Activated B cell treated with CpG ODN at 0.5 μM for 24 hours (primary cell): ENCODE measurements at regions of chr1 and their contacts with region 1.

Region 1: GRCh38 chr1:44775078-44775929 is at the start of gene RPS8:
- DNase-seq: peak; percentile 84
- ATAC-seq: peak; percentile 82
- H3K4me3 Mint-ChIP-seq: peak within 1 kb of the TSS; percentile 98
- H3K27ac Mint-ChIP-seq: peak within 1 kb of the TSS; percentile 99
- H3K4me1 Mint-ChIP-seq: peaks cover 40% of the 10 kb centered on the region
- H3K27me3 Mint-ChIP-seq: no peaks in the 10 kb centered on the region
- CTCF ChIP-seq: no peak
- total RNA-seq, gene RPS8: 3,767 and 4,240 TPM in 2 replicates

Region 2: DNA sequence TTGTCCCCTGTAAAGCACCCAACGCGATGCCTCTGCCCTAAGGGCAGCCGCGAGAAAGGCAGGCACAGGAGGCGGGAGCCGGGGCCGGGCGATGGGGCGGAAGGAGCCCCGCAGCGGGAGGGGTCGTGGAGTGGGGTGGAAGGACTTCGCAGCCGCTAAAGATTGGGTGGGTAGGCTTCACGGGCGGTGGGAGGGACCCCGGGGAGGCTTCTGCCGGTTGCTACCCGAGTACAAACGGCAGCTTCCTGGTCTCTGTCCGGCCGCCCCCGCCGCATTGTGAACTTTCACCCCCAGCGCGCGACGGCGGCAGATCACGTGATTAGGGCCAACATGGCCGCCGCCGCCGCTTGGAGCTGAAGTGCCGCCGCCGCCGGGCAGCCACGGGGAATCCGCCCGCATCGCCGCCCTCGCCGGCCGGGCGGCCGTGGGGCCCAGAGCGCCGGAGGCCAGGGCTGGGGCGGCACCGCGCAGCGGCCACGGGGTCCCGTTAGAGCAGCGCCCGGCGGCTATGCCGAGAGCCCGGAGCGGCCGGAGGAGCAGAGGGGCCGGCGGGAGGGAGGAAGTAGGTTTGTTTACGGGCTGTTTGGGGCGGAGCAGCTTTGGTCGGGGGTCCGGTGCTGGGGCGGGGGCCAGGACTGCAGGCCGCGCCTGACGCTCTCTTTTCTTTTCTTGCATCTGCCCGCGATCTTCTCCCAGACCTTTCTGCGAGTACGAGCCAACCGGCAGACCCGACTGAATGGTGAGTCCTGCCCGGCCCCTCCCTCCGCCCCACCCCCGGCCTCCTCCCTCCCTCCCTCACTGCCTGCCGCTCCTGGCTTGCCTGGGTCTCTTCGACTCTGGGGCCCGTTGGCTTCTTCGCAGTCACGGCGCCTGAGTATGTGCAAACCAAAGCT is 143.4 kb before region 1 on chr1:
- CTCF ChIA-PET with region 1: no interaction called
- POLR2A ChIA-PET with region 1: interaction called, 15 read pairs
- intact Hi-C with region 1: no loop called
- DNase-seq: peak; percentile 92
- ATAC-seq: peak; percentile 76
- H3K4me3 Mint-ChIP-seq: peak overlapping the region; percentile 91
- H3K27ac Mint-ChIP-seq: peak overlapping the region; percentile 98
- H3K4me1 Mint-ChIP-seq: peaks cover 38% of the 10 kb centered on the region
- H3K27me3 Mint-ChIP-seq: no peaks in the 10 kb centered on the region
- CTCF ChIP-seq: no peak

Region 3: DNA sequence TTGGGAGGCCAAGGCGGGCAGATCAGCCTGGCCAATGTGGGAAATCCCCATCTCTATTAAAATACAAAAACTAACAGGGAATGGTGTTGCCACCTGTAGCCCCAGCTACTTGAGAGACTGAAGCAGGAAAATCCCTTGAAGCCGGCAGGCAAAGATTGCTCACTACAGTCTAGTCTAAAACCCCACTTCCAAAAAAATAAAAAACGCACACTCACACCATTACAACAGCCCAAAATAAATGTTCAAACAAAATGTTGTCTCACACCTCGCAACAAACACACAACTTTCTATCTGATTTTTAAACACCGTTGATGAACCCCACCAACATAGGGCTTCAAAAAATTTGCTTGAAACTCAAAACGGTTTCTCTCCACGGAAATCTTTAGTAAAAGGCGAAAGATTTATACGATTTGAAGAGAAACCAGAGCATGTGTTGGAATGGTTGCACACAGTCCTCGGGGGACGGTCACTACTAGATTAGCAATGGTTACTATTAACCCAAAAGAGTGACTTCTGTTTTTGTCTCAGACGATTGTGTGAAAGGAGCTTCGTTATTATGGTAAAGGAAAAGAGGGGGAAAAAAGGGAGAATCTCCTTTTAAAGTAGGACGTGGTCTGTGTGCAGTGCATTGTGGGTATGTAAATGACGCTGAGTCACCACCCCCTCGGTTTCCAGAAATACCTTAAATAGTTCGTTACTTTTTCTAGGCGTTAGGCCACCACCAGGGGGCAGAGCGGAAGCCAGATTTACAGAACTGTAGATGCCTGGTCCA is 44.4 kb before region 1 on chr1 and contains the start of gene RNU5D-1:
- CTCF ChIA-PET with region 1: interaction called, 10 read pairs
- POLR2A ChIA-PET with region 1: interaction called, 149 read pairs
- intact Hi-C with region 1: loop called (anchors 1 kb)
- DNase-seq: peak; percentile 84
- ATAC-seq: peak; percentile 71
- H3K4me3 Mint-ChIP-seq: peak within 1 kb of the TSS; percentile 78
- H3K27ac Mint-ChIP-seq: peak within 1 kb of the TSS; percentile 100
- H3K4me1 Mint-ChIP-seq: peaks cover 37% of the 10 kb centered on the region
- H3K27me3 Mint-ChIP-seq: no peaks in the 10 kb centered on the region
- CTCF ChIP-seq: peak; percentile 39
- total RNA-seq, gene RNU5D-1: not detected in 2 replicates

Region 4: GRCh38 chr1:44760876-44761275 is 14.4 kb before region 1 on chr1:
- CTCF ChIA-PET with region 1: no interaction called
- POLR2A ChIA-PET with region 1: interaction called, 10 read pairs
- intact Hi-C with region 1: no loop called
- DNase-seq: no peak
- ATAC-seq: no peak
- H3K4me3 Mint-ChIP-seq: no peak overlapping the region
- H3K27ac Mint-ChIP-seq: no peak overlapping the region
- H3K4me1 Mint-ChIP-seq: peaks cover 13% of the 10 kb centered on the region
- H3K27me3 Mint-ChIP-seq: no peaks in the 10 kb centered on the region
- CTCF ChIP-seq: no peak

Region 5: GRCh38 chr1:44799770-44800584 is 24.7 kb after region 1 on chr1 and contains the start of gene PLK3:
- CTCF ChIA-PET with region 1: interaction called, 3 read pairs
- POLR2A ChIA-PET with region 1: interaction called, 38 read pairs
- intact Hi-C with region 1: no loop called
- DNase-seq: peak; percentile 94
- ATAC-seq: peak; percentile 88
- H3K4me3 Mint-ChIP-seq: peak within 1 kb of the TSS; percentile 97
- H3K27ac Mint-ChIP-seq: peak within 1 kb of the TSS; percentile 100
- H3K4me1 Mint-ChIP-seq: peaks cover 33% of the 10 kb centered on the region
- H3K27me3 Mint-ChIP-seq: no peaks in the 10 kb centered on the region
- CTCF ChIP-seq: peak; percentile 30
- total RNA-seq, gene PLK3: 63.0 and 82.0 TPM in 2 replicates

Region 6: DNA sequence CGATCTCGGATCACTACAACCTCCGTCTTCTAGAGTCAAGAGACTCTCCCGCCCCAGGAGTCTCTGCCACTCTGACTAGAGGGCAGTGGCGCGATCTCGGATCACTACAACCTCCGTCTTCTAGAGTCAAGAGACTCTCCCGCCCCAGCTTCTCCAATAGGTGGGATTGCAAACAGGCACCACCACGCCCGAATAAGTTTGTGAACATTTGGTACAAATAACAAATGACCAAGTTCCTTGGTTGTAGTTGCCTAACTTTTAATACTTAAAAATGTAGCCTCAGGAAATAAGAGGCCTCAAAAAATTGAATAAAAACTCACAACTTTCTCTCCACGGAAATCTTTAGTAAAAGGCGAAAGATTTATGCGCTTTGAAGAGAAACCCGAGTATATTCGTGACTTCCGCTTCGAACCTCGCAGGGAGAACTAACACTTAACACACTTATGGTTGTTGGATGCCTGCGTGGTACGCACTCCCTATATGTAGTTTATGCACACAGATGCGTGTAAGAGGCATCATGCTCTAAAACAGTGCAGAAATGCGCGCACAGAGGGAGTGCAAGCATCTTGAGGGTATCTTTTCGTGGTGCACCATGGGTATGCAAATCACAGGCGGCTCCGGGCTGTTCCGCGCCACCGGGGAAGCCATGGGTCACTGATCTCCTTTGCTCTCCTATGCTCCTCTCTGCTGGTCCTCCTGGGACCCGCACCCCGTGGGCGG is 44.5 kb after region 1 on chr1:
- CTCF ChIA-PET with region 1: no interaction called
- POLR2A ChIA-PET with region 1: interaction called, 73 read pairs
- intact Hi-C with region 1: loop called (anchors 1 kb)
- DNase-seq: peak; percentile 80
- ATAC-seq: peak; percentile 85
- H3K4me3 Mint-ChIP-seq: peak overlapping the region; percentile 88
- H3K27ac Mint-ChIP-seq: peak overlapping the region; percentile 100
- H3K4me1 Mint-ChIP-seq: peaks cover 35% of the 10 kb centered on the region
- H3K27me3 Mint-ChIP-seq: no peaks in the 10 kb centered on the region
- CTCF ChIP-seq: no peak